Right cardiac atrium (tissue), 5 donors: ENCODE measurements at regions of chr5 and their contacts with region 1.

Region 1: DNA sequence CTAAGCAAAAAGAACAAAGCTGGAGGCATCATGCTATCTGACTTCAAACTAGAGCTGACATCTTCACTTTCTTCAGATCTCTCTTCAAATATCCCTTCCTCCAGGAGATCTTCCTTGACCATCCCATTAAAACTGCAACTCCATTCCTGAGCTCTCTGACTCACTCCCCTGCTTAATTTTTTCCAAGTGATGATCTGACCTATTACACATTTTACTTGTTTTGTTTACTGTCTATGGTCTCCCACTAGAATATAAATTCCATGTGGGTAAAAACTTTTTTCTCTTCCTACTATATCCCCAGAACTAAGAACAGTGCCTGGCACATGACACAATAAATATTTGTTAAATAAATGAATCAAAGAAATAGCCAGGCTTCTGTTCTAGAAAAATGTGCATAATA is 87.5 kb downstream of the SLIT3 start:
- DNase-seq: no peak
- ATAC-seq: no peak
- H3K4me3 ChIP-seq: no peak overlapping the region
- H3K27ac ChIP-seq: no peak overlapping the region
- H3K4me1 ChIP-seq: no peaks in the 10 kb centered on the region
- H3K27me3 ChIP-seq: no peaks in the 10 kb centered on the region

Region 2: DNA sequence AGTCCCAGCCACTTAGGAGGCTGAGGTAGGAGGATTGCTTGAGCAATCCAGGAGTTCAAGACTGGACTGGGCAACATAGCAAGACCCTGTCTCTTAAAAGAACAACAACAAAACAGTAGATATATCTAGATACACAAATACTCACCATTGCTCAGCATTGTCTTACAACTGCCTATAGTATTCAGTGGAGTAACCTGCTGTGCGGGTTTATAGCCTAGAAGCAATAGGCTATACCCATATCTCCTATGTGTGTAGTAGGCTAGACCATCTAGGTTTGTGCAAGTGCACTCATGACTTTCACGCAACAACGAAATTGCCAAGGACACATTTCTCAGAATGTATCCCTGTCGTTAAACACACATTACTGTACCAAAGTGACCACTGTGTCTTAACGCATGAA is 42.7 kb after region 1 on chr5:
- intact Hi-C with region 1: loop called in 1 of 4 experiments (anchors 2 kb)
- DNase-seq: no peak
- ATAC-seq: no peak
- H3K4me3 ChIP-seq: no peak overlapping the region
- H3K27ac ChIP-seq: no peak overlapping the region
- H3K4me1 ChIP-seq: peaks cover 3% of the 10 kb centered on the region
- H3K27me3 ChIP-seq: no peaks in the 10 kb centered on the region